Activated T-helper 2 cell treated with anti-CD3 and anti-CD28 coated beads, Interferon-gamma antibody, Interleukin-2, Interleukin-4, amounts not matched to agents 10 μg/mL and 5 μg/mL and 100 μg/mL, durations not matched to agents 14 hours and 24 hours and 36 hours (primary cell): ENCODE measurements at regions of chr10 and their contacts with region 1.

Region 1: DNA sequence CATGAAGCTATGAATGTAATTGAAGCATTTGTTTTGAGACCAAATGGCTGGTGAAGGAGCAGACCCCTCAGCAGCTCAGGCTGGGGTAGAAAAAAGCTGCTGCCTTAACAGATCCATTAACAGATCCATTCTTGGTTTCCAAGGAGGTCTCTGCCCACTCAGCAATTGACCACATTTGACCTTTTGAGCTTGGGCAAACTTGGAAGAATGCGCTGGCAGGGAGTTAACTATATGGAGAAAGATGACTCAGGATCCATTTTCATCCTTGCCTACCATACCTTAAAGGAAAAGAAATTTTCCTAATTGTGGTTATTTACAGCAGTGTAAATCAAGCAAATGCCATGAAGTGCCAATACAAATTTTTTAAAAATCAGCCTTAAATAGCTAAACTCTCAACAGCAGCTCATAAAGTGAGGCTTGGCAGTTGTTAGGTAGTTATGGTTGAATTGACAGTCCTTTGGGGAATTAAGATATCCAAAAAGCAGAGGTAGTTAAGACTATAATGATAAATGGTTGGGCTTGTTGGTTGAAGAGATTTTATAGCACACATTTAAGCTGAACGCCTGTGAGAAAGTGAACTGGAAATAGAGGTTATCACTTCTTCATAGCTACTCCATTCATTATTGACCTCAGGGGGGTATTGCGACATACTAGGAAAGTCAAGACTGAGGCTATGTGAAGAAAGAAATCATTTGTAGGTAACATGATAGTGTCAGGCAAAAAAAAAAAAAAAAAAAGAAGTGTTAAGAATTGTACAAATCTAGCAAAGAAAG is 83.9 kb downstream of the MKX start:
- DNase-seq: no peak
- H3K4me3 Mint-ChIP-seq: no peak overlapping the region
- H3K27ac Mint-ChIP-seq: no peak overlapping the region
- H3K4me1 Mint-ChIP-seq: no peaks in the 10 kb centered on the region
- H3K27me3 Mint-ChIP-seq: peaks cover 15% of the 10 kb centered on the region

Region 2: GRCh38 chr10:27369880-27370279 is 291.8 kb before region 1 on chr10:
- intact Hi-C with region 1: loop called (anchors 2 kb)
- DNase-seq: no peak
- H3K4me3 Mint-ChIP-seq: no peak overlapping the region
- H3K27ac Mint-ChIP-seq: no peak overlapping the region
- H3K4me1 Mint-ChIP-seq: peaks cover 7% of the 10 kb centered on the region
- H3K27me3 Mint-ChIP-seq: peaks cover 7% of the 10 kb centered on the region

Region 3: DNA sequence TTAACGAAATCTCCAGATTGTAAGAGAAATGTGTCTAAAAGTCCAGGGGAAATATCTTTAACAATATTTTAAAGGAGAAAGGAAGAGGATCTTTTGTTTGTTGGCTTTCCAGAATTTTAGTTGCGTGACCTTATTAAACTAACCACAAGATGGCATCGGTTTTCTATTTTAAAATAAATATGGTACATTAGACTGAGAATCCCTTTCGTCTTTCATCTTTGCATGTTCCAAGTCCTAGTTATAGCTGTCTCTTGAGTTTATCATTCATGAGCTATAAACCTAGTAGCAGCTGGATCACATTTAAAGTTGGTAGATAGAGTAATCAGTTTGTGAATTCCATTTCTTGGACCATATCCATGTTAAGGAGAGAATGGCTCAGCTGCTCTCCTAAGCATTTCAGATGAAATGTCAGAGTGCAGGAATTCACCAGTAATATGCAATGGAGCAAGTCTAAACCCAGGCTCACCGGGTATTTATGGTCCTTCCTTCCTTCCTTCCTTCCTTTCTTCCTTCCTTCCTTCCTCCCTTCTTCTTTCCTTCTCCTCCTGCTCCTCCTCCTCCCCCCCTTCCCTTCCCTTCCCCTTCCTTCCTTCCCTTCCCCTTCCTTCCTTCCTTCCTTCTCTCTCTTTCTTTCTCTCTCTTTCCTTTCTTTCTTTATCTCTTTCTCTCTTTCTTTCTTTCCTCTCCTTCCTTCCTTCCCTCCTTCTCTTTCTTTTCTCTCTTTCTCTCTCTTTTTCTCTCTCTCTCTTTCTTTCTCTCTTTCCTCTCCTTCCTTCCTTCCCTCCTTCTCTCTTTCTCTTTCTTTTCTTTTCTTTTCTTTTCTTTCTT is 215.4 kb before region 1 on chr10:
- intact Hi-C with region 1: loop called (anchors 2 kb)
- DNase-seq: no peak
- H3K4me3 Mint-ChIP-seq: no peak overlapping the region
- H3K27ac Mint-ChIP-seq: no peak overlapping the region
- H3K4me1 Mint-ChIP-seq: peaks cover 5% of the 10 kb centered on the region
- H3K27me3 Mint-ChIP-seq: peaks cover 3% of the 10 kb centered on the region

Region 4: GRCh38 chr10:27536437-27536836 is 125.3 kb before region 1 on chr10:
- intact Hi-C with region 1: no loop called
- DNase-seq: no peak
- H3K4me3 Mint-ChIP-seq: no peak overlapping the region
- H3K27ac Mint-ChIP-seq: no peak overlapping the region
- H3K4me1 Mint-ChIP-seq: peaks cover 11% of the 10 kb centered on the region
- H3K27me3 Mint-ChIP-seq: no peaks in the 10 kb centered on the region

Region 5: DNA sequence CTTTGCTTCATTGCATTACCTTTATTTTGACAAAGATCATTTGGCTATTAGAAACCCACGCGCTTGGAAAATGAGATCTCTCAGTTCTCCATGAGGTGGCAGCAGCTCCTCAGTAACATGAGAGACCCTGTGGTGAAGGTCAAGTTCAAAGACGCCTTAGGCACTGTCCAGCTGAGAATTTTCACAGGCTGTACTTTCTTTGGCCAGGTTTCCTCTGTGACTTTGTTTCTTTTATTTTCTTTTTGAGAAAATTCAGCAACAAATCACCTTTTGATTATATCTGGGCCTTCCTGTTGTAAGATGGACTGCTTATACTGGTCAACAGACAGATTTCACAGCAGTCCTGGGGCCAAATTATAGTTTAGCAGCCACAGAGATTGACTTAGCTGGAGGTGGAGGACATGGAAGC is 103.1 kb before region 1 on chr10:
- intact Hi-C with region 1: loop called (anchors 2 kb)
- DNase-seq: peak; percentile 19
- H3K4me3 Mint-ChIP-seq: no peak overlapping the region
- H3K27ac Mint-ChIP-seq: no peak overlapping the region
- H3K4me1 Mint-ChIP-seq: no peaks in the 10 kb centered on the region
- H3K27me3 Mint-ChIP-seq: peaks cover 6% of the 10 kb centered on the region

Region 6: DNA sequence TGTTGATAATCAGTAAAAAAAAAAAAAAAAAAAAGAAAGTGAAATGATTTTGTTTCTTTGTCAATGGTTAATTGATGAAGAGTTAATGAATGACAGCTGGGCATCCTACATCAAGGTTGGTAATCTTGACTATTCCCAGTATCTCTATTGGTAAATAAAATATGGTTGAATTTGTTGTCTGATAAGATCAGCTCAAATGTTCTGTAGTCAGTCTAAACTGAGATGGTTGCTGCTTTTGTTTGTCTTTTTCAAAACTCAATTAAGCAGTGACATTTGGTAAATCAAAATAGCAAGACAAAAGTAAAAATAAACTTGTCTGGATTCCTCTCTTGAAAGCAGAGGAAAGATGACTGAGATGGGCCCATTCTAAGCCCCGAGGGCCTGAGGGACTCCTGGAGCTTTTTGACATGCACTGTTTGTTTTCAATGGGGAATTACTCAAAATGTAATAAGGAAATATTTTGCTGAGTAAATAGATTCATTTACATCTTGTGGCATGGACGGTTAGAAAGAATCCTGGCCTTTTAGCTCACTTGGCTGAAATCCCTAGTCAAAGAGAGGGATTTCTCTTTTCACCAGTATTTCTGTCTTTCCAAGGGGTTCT is 24.2 kb before region 1 on chr10:
- intact Hi-C with region 1: no loop called
- DNase-seq: no peak
- H3K4me3 Mint-ChIP-seq: no peak overlapping the region
- H3K27ac Mint-ChIP-seq: no peak overlapping the region
- H3K4me1 Mint-ChIP-seq: no peaks in the 10 kb centered on the region
- H3K27me3 Mint-ChIP-seq: peaks cover 6% of the 10 kb centered on the region

Region 7: GRCh38 chr10:27783660-27784059 is 122.0 kb after region 1 on chr10:
- intact Hi-C with region 1: no loop called
- DNase-seq: no peak
- H3K4me3 Mint-ChIP-seq: no peak overlapping the region
- H3K27ac Mint-ChIP-seq: no peak overlapping the region
- H3K4me1 Mint-ChIP-seq: no peaks in the 10 kb centered on the region
- H3K27me3 Mint-ChIP-seq: peaks cover 13% of the 10 kb centered on the region